ENCODE measurements at regions of chr12 and their contacts with region 1.

Region 1: DNA sequence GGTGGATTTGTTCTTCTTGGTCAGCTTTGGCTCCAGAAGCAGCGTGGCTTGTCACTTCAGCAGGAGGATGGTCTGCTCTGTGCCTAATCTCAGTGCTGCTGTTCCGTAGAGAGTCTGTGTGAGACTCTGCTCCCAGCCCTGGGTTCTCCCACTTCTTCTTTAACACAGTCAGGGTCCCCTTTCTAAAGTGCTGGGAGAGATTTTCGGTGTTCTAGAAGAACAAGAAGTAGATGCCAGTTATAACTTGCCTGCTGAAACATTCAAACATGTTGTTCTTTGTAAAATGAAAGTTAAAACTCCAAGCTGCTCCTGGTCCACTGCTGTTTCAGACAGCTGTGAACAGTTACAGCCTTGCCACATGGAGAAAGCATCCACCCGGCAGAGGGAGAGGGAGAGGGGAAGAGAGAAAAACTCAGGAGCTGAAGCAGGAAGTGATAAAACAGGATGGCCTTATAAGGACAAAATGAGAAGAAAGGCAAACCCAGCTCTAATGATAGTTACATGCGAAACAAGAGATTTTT is 55.2 kb upstream of the CERS5 start:
- DNase-seq: peak; percentile 74
- H3K27ac ChIP-seq: peak overlapping the region; percentile 91
- CTCF ChIP-seq: no peak

Region 2: GRCh38 chr12:50283229-50283923 is 61.0 kb after region 1 on chr12 and contains the start of gene LIMA1:
- CTCF ChIA-PET with region 1: interaction called, 4 read pairs
- POLR2A ChIA-PET with region 1: interaction called, 14 read pairs
- DNase-seq: peak; percentile 94
- H3K27ac ChIP-seq: peak within 1 kb of the TSS; percentile 70
- CTCF ChIP-seq: peak; percentile 15; the same call in 1 of the 2 replicates

Measured in RWPE1 (cell line).